GM10248 (cell line): ENCODE measurements at regions of chr11 and their contacts with region 1.

Region 1: GRCh38 chr11:66438504-66439466 is at the start of gene MRPL11:
- DNase-seq: peak; percentile 96
- CTCF ChIP-seq: peak; percentile 74

Region 2: DNA sequence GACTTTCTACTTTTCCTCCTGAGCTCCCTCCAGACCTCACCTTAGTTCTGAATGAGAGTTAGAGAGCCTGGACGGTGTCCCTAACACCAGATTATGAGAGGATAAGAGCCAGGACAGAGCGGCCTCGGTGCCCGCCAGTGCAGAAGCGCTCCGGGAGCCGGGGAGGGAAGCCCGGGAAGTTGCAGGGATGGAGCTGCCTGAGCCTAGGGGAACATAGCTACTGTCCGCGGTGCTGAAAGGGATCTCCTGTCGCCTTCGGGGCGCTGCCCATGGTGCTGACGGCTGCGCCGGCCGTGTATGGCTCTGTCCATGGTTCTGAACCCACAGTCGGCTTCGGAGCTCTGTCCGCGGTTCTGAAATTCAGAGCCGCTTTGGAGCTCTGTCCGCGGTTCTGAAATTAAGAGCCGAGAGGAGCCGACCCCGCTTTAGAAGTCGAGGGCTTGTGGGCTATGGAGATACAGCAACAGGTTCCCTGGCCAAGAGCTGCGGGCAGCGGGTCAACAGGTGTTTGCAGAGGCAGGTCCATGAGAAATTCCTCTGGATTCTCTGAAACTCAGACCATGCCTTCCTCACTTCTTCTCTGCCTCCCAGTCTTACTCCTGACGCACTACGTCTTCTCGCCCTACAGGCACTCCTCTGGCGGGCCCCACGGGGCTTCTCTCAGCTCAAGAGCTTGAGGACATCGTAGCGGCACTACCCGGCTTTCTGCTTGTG is 17.1 kb before region 1 on chr11:
- CTCF ChIA-PET with region 1: interaction called, 20 read pairs
- POLR2A ChIA-PET with region 1: no interaction called
- DNase-seq: peak; percentile 93
- CTCF ChIP-seq: no peak

Region 3: DNA sequence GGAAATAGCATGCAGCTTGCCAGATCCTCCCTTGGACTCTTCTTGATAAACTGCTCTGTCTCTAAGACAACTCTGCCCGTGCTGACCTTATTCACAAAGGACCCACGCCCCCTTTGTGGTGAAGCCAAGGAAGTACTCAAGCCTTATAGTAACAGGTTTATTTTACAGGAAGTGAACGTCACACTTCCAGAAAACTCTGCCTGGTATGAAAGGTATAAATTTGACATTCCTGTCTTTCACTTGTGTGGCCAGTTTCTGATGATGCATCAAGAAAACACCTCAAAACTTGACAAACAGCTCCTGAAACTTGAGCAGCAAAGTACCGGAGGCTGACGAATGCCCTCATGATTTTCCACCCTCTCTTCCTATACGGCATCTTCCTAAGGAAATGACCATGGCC is 15.5 kb after region 1 on chr11:
- CTCF ChIA-PET with region 1: interaction called, 19 read pairs
- POLR2A ChIA-PET with region 1: no interaction called
- DNase-seq: no peak
- CTCF ChIP-seq: no peak

Region 4: DNA sequence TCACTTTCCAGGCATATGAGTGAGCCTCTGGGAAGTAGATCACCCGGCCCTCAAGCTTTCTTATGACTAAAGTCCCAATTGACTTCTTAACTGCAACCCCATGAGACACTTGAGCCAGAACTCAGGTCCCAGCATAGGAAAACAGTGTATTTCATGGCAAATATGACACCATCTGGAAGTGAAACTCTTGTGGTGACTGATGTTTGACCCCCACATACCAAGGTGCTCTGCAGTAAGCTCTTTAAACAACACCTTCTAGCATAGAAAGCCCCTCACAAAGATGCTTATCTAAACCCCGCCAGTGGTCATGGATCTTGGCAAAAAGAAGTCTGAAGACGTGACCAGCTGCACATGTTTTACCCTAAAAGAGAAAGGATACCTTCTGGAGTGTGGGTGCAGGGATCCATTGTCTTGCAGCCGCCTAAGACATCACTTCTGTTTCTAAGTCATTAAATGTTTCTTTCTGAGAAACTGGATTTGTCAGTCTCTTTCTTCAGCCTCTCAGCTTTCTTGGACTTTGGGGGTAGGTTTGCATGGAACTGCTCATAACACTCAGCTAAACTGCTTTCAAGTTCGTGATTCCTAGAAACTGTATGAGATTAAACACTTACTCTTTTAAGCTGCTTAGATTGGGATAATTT is 20.5 kb after region 1 on chr11:
- CTCF ChIA-PET with region 1: interaction called, 19 read pairs
- POLR2A ChIA-PET with region 1: no interaction called
- DNase-seq: peak; percentile 39
- CTCF ChIP-seq: no peak

Region 5: GRCh38 chr11:66466225-66467027 is 27.6 kb after region 1 on chr11 and contains the start of gene PELI3:
- CTCF ChIA-PET with region 1: interaction called, 17 read pairs
- POLR2A ChIA-PET with region 1: no interaction called
- DNase-seq: peak; percentile 99
- CTCF ChIP-seq: no peak